Sigmoid colon (tissue), 7 donors: ENCODE measurements at regions of chr12 and their contacts with region 1.

Region 1: DNA sequence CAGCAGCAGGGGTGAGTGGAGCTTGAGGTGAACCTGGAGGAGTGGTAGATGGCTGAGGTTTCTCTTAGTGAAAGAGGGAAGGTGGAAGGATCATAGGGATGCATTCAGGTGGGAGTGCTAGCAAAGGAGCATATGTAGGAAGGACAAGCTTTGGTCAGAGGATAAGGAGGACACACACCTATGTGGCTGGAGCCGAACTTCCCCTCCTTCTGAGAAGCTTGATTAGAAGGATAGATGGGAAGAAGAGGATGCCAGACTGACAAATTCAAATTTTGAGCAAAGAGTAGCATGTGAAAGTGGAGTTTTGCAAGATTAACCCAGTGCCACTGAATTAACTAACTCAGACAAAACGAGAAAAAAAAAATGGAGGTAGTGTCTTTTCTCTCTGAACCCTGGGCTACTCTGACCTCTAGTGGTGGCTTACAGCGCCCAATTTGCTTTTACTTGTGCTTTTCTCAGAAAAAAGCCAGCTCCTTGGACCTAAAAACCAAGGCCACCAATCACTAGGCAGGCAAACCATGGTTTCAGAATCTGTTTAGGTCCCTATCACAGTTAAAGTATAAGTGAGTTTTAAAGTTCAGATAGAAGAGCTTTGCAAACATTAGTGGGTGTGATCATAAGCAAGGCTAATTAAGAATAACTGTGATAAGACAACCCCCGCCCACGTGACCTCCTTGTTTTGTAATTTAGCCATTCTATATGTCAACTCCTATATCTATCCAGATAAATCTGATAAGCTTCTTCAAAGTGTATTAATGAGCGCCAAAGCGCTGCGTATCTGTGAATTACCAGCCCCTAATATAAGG is 15.5 kb downstream of the EMP1 start:
- DNase-seq: peak; percentile 76
- H3K4me3 ChIP-seq: no peak overlapping the region
- H3K27ac ChIP-seq: peak overlapping the region in 1 of 4 donors; percentile 21
- H3K4me1 ChIP-seq: peaks cover 0 to 35% (median 31%) of the 10 kb centered on the region in 4 donors
- H3K27me3 ChIP-seq: no peaks in the 10 kb centered on the region
- CTCF ChIP-seq: peak; percentile 51 to 80 (median 60)
- EP300 ChIP-seq: no peak
- POLR2A ChIP-seq: no peak

Region 2: DNA sequence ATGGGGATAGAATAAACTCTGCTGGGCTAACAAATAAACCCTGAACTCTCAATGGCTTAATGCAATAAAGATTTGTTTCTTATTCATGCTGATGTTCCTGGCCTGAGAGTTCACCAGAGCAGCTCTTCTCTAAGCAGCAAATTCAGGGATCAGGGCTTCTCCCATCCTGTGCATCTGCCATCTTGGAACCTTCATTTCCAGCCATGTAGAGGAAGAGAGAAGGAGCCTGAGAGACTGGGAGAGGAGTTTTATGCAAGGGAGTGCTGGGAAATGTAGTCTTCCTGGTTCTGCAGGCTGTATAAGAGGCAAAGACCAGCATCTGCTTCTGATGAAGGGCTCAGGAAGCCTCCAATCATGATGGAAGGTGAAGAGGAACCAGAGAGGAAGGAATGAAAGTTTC is 447.2 kb before region 1 on chr12:
- intact Hi-C with region 1: no loop called
- DNase-seq: no peak
- H3K4me3 ChIP-seq: no peak overlapping the region
- H3K27ac ChIP-seq: no peak overlapping the region
- H3K4me1 ChIP-seq: no peaks in the 10 kb centered on the region
- H3K27me3 ChIP-seq: no peaks in the 10 kb centered on the region
- CTCF ChIP-seq: no peak
- EP300 ChIP-seq: no peak
- POLR2A ChIP-seq: no peak

Region 3: GRCh38 chr12:12916135-12916944 is 295.7 kb before region 1 on chr12:
- intact Hi-C with region 1: loop called (anchors 1 kb)
- DNase-seq: peak; percentile 91
- H3K4me3 ChIP-seq: no peak overlapping the region
- H3K27ac ChIP-seq: peak overlapping the region in 3 of 4 donors; percentile 31 to 50 (median 37)
- H3K4me1 ChIP-seq: peaks cover 0 to 3% (median 0%) of the 10 kb centered on the region in 4 donors
- H3K27me3 ChIP-seq: no peaks in the 10 kb centered on the region
- CTCF ChIP-seq: peak; percentile 90 to 96 (median 93)
- EP300 ChIP-seq: no peak
- POLR2A ChIP-seq: no peak

Region 4: DNA sequence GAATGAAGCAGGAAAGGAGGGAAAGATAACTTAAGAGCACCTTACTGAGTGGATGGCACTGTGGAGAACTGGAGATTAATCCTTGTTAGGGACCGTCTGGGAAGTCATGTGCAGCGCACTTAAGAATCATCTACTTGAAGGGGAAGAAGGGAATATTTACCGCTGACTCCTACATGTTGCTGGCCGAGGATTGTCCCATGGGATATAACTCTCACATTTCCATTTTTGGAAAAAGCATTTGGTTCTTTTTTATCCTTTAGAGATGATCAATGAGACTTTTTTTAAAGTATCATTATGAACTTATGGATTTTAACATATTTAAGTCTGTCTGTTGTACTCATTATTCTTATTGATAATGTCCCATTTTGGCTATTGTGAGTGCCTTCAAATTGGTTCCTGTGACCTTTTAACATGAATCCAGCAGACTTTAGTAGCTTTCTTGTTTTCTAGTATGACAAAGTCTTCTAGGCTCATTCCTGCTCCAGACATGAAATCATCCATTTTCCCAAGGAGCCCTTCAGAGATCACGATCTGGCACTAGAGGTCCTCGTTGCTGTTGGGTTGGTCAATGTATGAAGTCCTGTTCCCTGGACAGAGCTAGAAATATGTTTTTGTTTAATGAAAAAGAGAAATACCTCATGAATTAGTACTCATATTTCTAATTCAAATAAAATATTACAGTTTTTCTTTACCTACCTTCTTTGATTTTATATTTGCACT is 188.1 kb before region 1 on chr12:
- intact Hi-C with region 1: loop called (anchors 5 kb)
- DNase-seq: no peak
- H3K4me3 ChIP-seq: no peak overlapping the region
- H3K27ac ChIP-seq: no peak overlapping the region
- H3K4me1 ChIP-seq: peaks cover 0 to 13% (median 3%) of the 10 kb centered on the region in 4 donors
- H3K27me3 ChIP-seq: no peaks in the 10 kb centered on the region
- CTCF ChIP-seq: no peak
- EP300 ChIP-seq: no peak
- POLR2A ChIP-seq: no peak

Region 5: DNA sequence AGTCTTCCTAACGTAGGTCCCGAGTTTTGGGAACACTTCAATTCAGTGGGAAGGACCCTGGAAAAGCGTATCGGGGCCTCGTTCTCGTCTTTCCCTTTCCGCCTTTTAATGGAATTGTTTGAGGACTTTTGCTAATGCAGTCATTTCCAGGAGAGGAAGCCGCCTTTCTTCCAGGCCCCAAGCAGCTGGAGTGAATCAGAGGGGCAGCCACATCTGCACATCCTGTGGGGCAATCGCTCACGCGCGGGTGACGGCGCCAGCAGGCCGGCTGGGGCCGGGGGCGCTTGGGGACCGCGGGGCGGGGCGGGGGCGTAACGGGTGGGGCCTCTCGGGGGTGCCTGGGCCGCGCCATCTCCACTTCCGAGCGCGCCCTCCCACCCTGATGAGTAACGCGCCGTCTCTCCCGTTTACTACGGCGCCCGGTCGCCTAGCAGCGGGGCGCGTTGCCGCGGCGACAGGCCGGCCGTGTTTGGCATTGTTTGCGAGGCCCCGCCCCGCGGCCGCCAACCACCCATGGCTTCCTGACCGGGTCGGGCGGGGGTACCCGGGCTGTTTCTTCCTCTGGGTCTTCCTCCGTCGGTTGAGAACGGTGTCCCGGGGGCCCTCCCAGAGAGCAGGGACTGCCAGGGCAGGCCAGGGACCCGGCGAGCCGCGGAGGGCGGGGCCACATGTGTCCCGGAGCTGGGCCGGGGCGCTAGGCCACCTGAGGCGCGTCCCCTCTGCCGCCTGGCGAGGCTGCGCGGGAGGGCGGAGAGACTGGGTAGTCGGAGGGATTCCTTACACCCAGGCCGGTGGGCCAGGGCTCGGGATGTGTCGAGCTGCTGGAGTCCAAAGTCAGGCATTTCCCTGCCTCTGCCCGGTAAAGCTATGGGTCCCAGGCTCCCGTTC is 110.9 kb before region 1 on chr12:
- intact Hi-C with region 1: loop called (anchors 5 kb)
- DNase-seq: peak; percentile 95
- H3K4me3 ChIP-seq: peak overlapping the region; percentile 46 to 59 (median 54)
- H3K27ac ChIP-seq: peak overlapping the region; percentile 78 to 93 (median 80)
- H3K4me1 ChIP-seq: peaks cover 0 to 45% (median 29%) of the 10 kb centered on the region in 4 donors
- H3K27me3 ChIP-seq: no peaks in the 10 kb centered on the region
- CTCF ChIP-seq: no peak
- EP300 ChIP-seq: peak in 3 of 4 donors; percentile 18 to 78 (median 75)
- POLR2A ChIP-seq: no peak

Region 6: GRCh38 chr12:13179211-13180074 is 32.6 kb before region 1 on chr12:
- intact Hi-C with region 1: no loop called
- DNase-seq: peak; percentile 74
- H3K4me3 ChIP-seq: no peak overlapping the region
- H3K27ac ChIP-seq: peak overlapping the region; percentile 59 to 73 (median 67)
- H3K4me1 ChIP-seq: peaks cover 0 to 16% (median 14%) of the 10 kb centered on the region in 4 donors
- H3K27me3 ChIP-seq: no peaks in the 10 kb centered on the region
- CTCF ChIP-seq: no peak
- EP300 ChIP-seq: no peak
- POLR2A ChIP-seq: no peak